B cell (primary cell): ENCODE measurements at regions of chr1 and their contacts with region 1.

Region 1: GRCh38 chr1:226634166-226634588 is 85.6 kb downstream of the STUM start:
- DNase-seq: peak; percentile 88
- ATAC-seq: peak; percentile 76
- H3K4me3 ChIP-seq: no peak overlapping the region
- H3K4me3 Mint-ChIP-seq: peak overlapping the region; percentile 2
- H3K27ac ChIP-seq: peak overlapping the region; percentile 70 to 77
- H3K27ac Mint-ChIP-seq: peak overlapping the region; percentile 43
- H3K4me1 ChIP-seq: peaks cover 37 to 61% of the 10 kb centered on the region in 2 donors
- H3K4me1 Mint-ChIP-seq: peaks cover 58% of the 10 kb centered on the region
- H3K27me3 ChIP-seq: no peaks in the 10 kb centered on the region
- H3K27me3 Mint-ChIP-seq: no peaks in the 10 kb centered on the region
- CTCF ChIP-seq: peak; percentile 98

Region 2: GRCh38 chr1:226526801-226527595 is 107.2 kb before region 1 on chr1:
- CTCF ChIA-PET with region 1: no interaction called
- POLR2A ChIA-PET with region 1: no interaction called
- intact Hi-C with region 1: no loop called
- DNase-seq: no peak
- ATAC-seq: no peak
- H3K4me3 ChIP-seq: no peak overlapping the region
- H3K4me3 Mint-ChIP-seq: peak overlapping the region; percentile 5
- H3K27ac ChIP-seq: no peak overlapping the region
- H3K27ac Mint-ChIP-seq: no peak overlapping the region
- H3K4me1 ChIP-seq: no peaks in the 10 kb centered on the region
- H3K4me1 Mint-ChIP-seq: no peaks in the 10 kb centered on the region
- H3K27me3 ChIP-seq: peaks cover 0 to 5% (median 0%) of the 10 kb centered on the region in 4 experiments
- H3K27me3 Mint-ChIP-seq: peaks cover 31% of the 10 kb centered on the region
- CTCF ChIP-seq: no peak

Region 3: GRCh38 chr1:226649780-226650179 is 15.6 kb after region 1 on chr1:
- CTCF ChIA-PET with region 1: interaction called, 40 read pairs
- POLR2A ChIA-PET with region 1: no interaction called
- intact Hi-C with region 1: no loop called
- DNase-seq: no peak
- ATAC-seq: no peak
- H3K4me3 ChIP-seq: no peak overlapping the region
- H3K4me3 Mint-ChIP-seq: no peak overlapping the region
- H3K27ac ChIP-seq: no peak overlapping the region
- H3K27ac Mint-ChIP-seq: peak overlapping the region; percentile 46
- H3K4me1 ChIP-seq: peaks cover 15 to 21% of the 10 kb centered on the region in 2 donors
- H3K4me1 Mint-ChIP-seq: peaks cover 45% of the 10 kb centered on the region
- H3K27me3 ChIP-seq: no peaks in the 10 kb centered on the region
- H3K27me3 Mint-ChIP-seq: no peaks in the 10 kb centered on the region
- CTCF ChIP-seq: peak; percentile 35

Region 4: GRCh38 chr1:226687426-226687825 is 53.2 kb after region 1 on chr1:
- CTCF ChIA-PET with region 1: interaction called, 88 read pairs
- POLR2A ChIA-PET with region 1: interaction called, 8 read pairs
- intact Hi-C with region 1: loop called (anchors 1 kb)
- DNase-seq: peak; percentile 73
- ATAC-seq: peak; percentile 44
- H3K4me3 ChIP-seq: no peak overlapping the region
- H3K4me3 Mint-ChIP-seq: peak overlapping the region; percentile 74
- H3K27ac ChIP-seq: no peak overlapping the region
- H3K27ac Mint-ChIP-seq: peak overlapping the region; percentile 91
- H3K4me1 ChIP-seq: peaks cover 78 to 93% of the 10 kb centered on the region in 2 donors
- H3K4me1 Mint-ChIP-seq: peaks cover 97% of the 10 kb centered on the region
- H3K27me3 ChIP-seq: no peaks in the 10 kb centered on the region
- H3K27me3 Mint-ChIP-seq: no peaks in the 10 kb centered on the region
- CTCF ChIP-seq: peak; percentile 52

Region 5: GRCh38 chr1:226711976-226712741 is 78.0 kb after region 1 on chr1:
- CTCF ChIA-PET with region 1: interaction called, 11 read pairs
- POLR2A ChIA-PET with region 1: no interaction called
- intact Hi-C with region 1: no loop called
- DNase-seq: peak; percentile 50
- ATAC-seq: peak; percentile 75
- H3K4me3 ChIP-seq: peak overlapping the region in 4 of 5 experiments; percentile 18 to 57 (median 22)
- H3K4me3 Mint-ChIP-seq: peak overlapping the region; percentile 56
- H3K27ac ChIP-seq: peak overlapping the region; percentile 70 to 84
- H3K27ac Mint-ChIP-seq: peak overlapping the region; percentile 76
- H3K4me1 ChIP-seq: peaks cover 59 to 73% of the 10 kb centered on the region in 2 donors
- H3K4me1 Mint-ChIP-seq: peaks cover 78% of the 10 kb centered on the region
- H3K27me3 ChIP-seq: no peaks in the 10 kb centered on the region
- H3K27me3 Mint-ChIP-seq: no peaks in the 10 kb centered on the region
- CTCF ChIP-seq: no peak

Region 6: DNA sequence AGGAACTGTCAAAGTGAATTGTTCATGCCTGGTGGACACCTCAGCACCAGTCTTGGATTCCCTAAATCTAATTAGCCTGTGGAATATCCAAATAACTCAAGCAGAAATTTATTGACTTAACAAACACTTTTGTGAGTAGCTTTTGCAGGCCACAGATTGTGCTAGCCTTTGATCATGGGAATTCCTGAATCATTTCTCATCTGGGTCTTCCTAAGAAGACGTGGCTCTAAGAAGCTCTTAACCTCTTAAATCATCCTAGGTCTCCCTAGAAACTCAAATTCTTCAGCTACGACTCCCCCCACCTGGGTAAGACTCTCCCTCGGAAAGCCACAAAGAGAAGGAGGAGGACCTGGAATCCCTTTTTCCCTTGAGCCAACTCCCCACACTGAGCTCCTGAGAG is 182.4 kb after region 1 on chr1:
- CTCF ChIA-PET with region 1: interaction called, 15 read pairs
- POLR2A ChIA-PET with region 1: no interaction called
- intact Hi-C with region 1: no loop called
- DNase-seq: no peak
- ATAC-seq: no peak
- H3K4me3 ChIP-seq: no peak overlapping the region
- H3K4me3 Mint-ChIP-seq: no peak overlapping the region
- H3K27ac ChIP-seq: no peak overlapping the region
- H3K27ac Mint-ChIP-seq: no peak overlapping the region
- H3K4me1 ChIP-seq: no peaks in the 10 kb centered on the region
- H3K4me1 Mint-ChIP-seq: no peaks in the 10 kb centered on the region
- H3K27me3 ChIP-seq: no peaks in the 10 kb centered on the region
- H3K27me3 Mint-ChIP-seq: no peaks in the 10 kb centered on the region
- CTCF ChIP-seq: no peak